Posterior vena cava (tissue), 2 donors: ENCODE measurements at regions of chr2 and their contacts with region 1.

Region 1: GRCh38 chr2:231319867-231320266 is 75.6 kb upstream of the B3GNT7 start:
- DNase-seq: no peak

Region 2: GRCh38 chr2:230781130-230781797 is 538.6 kb before region 1 on chr2:
- intact Hi-C with region 1: no loop called
- DNase-seq: no peak

Region 3: GRCh38 chr2:230902180-230902899 is 417.5 kb before region 1 on chr2:
- intact Hi-C with region 1: no loop called
- DNase-seq: peak; percentile 84

Region 4: GRCh38 chr2:231280846-231281245 is 39.0 kb before region 1 on chr2:
- intact Hi-C with region 1: loop called in 1 of 2 experiments (anchors 1 kb)
- DNase-seq: no peak

Region 5: GRCh38 chr2:231387904-231388724 is 68.2 kb after region 1 on chr2:
- intact Hi-C with region 1: no loop called
- DNase-seq: no peak